ENCODE measurements at regions of chr20 and their contacts with region 1.

Region 1: GRCh38 chr20:38714308-38714707 is 10.0 kb upstream of the SLC32A1 start:
- DNase-seq: no peak
- ATAC-seq: no peak
- H3K4me3 ChIP-seq: no peak overlapping the region
- H3K27ac ChIP-seq: no peak overlapping the region
- H3K4me1 ChIP-seq: no peaks in the 10 kb centered on the region
- CTCF ChIP-seq: no peak
- EP300 ChIP-seq: no peak
- POLR2A ChIP-seq: no peak
- RAD21 ChIP-seq: no peak

Region 2: DNA sequence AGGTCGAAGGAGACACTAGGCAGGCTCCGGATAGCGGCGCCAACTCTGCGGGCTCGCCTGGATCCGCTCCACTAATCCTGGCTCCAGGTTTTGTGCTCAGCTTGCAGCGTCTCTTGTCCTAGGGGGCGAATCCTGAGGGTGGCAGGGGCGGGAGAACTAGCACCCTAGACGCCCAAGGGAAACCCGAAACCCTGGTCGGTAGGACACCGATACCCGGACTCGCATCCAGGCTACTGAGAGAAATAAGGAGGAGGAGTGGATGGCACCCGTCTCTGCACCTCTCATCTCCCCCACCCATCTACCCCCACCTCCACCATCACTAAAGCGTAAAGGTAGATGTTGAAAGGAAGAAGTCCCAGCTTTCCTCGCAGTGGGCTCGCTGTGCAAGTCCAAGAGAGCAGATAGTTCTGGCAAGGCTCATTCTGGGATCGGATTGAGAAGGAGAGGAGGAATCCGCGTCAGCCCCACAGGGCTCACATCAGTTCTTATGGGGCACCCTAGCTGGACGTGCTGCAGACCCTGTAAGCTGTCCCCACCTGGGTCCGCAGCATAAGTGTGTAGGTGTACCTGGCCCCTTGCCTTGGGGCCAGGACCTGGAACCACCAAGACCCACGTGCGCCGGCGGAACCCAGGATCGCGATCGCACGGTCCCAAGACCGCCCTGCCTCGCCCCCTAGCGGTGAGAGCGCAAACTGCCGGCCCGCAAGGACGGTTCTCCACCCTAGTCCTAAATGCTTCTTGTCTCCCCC is 16.9 kb after region 1 on chr20:
- CTCF ChIA-PET with region 1: interaction called, 20 read pairs
- POLR2A ChIA-PET with region 1: no interaction called
- DNase-seq: peak; percentile 79 to 93
- ATAC-seq: peak; percentile 79 to 92
- H3K4me3 ChIP-seq: peak overlapping the region; percentile 57
- H3K27ac ChIP-seq: peak overlapping the region; percentile 59; a peak in 5 of 6 replicates
- H3K4me1 ChIP-seq: peaks cover 5% of the 10 kb centered on the region; the same call in 1 of the 3 replicates
- CTCF ChIP-seq: peak; percentile 84
- EP300 ChIP-seq: no peak
- POLR2A ChIP-seq: 0 out of 2 replicates have a peak, but pooled peaks have one; percentile 5
- RAD21 ChIP-seq: peak; percentile 56 to 60

Measured in A549 (cell line).